Natural killer cell (primary cell): ENCODE measurements at regions of chr17 and their contacts with region 1.

Region 1: DNA sequence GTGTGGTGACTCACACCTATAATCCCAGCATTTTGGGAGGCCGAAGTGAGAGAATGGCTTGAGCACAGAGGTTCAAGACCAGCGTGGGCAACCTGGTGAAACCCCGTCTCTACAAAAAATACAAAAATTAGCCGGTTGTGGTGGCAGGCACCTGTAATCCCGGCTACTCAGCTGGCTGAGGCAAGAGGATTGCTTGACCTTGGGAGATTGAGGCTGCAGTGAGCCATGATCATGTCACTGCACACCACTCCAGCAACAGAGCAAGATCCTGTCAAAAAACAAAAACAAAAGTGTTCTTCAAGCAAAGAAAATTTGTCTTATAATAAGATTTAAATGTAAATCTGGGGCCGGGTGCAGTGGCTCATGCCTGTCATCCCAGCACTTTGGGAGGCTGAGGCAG is 51.5 kb downstream of the PAFAH1B1 start:
- DNase-seq: no peak
- ATAC-seq: no peak
- H3K4me3 ChIP-seq: no peak overlapping the region
- H3K4me3 Mint-ChIP-seq: no peak overlapping the region
- H3K27ac ChIP-seq: no peak overlapping the region
- H3K27ac Mint-ChIP-seq: peak overlapping the region in 1 of 2 donors; percentile 37
- H3K4me1 ChIP-seq: no peaks in the 10 kb centered on the region
- H3K4me1 Mint-ChIP-seq: peaks cover 21 to 25% of the 10 kb centered on the region in 2 donors
- H3K27me3 ChIP-seq: no peaks in the 10 kb centered on the region
- H3K27me3 Mint-ChIP-seq: no peaks in the 10 kb centered on the region
- CTCF ChIP-seq: no peak

Region 2: GRCh38 chr17:2631211-2631610 is 13.8 kb before region 1 on chr17:
- intact Hi-C with region 1: loop called (anchors 2 kb)
- DNase-seq: no peak
- ATAC-seq: no peak
- H3K4me3 ChIP-seq: no peak overlapping the region
- H3K4me3 Mint-ChIP-seq: peak overlapping the region; percentile 51
- H3K27ac ChIP-seq: no peak overlapping the region
- H3K27ac Mint-ChIP-seq: peak overlapping the region; percentile 75 to 86
- H3K4me1 ChIP-seq: peaks cover 26% of the 10 kb centered on the region
- H3K4me1 Mint-ChIP-seq: peaks cover 82 to 89% of the 10 kb centered on the region in 2 donors
- H3K27me3 ChIP-seq: no peaks in the 10 kb centered on the region
- H3K27me3 Mint-ChIP-seq: no peaks in the 10 kb centered on the region
- CTCF ChIP-seq: no peak